AG04449 (cell line): ENCODE measurements at regions of chr5 and their contacts with region 1.

Region 1: DNA sequence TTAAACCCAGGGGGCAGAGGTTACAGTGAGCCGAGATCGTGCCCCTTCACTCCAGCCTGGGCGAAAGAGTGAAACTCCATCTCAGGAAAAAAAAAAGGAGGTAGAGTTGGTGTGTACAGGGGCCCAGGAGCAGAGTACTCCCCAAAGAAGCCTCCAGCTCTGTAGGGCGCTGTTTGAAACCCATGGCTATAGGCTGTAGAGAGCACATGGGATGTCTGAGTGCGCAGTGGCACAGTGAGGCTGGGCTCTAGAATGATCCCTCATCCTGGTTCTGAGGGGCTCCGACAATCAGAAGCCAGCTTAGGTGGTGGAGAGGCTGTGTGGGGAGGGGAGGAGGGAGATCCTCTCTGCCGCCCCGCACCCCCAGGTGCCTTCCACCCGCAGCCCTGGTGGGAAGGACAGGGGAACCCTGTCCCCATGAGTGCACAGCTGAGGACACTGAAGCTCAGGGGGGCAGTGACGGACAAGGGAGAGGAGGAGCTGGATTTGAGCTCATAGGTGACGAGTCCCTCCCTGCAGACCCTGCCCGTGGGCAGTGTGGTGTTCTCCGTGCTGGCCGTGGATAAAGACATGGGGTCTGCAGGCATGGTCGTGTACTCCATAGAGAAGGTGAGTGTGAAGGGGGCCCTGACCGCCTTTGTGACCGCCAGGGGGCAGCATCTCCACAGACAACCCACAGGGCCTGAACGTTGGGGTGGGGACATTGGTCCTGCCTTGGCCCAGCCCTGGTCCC is 24.6 kb downstream of the CDHR2 start:
- DNase-seq: no peak
- H3K4me3 ChIP-seq: no peak overlapping the region
- CTCF ChIP-seq: peak; percentile 88

Region 2: GRCh38 chr5:176415952-176416924 is 157.5 kb before region 1 on chr5 and contains the start of gene CLTB:
- CTCF ChIA-PET with region 1: interaction called, 66 read pairs
- POLR2A ChIA-PET with region 1: no interaction called
- DNase-seq: no peak
- H3K4me3 ChIP-seq: peak within 1 kb of the TSS; percentile 72
- CTCF ChIP-seq: peak; percentile 73

Region 3: GRCh38 chr5:176537608-176538504 is 35.9 kb before region 1 on chr5:
- CTCF ChIA-PET with region 1: interaction called, 12 read pairs
- POLR2A ChIA-PET with region 1: no interaction called
- DNase-seq: peak; percentile 97
- H3K4me3 ChIP-seq: peak overlapping the region; percentile 99
- CTCF ChIP-seq: no peak

Region 4: GRCh38 chr5:176559683-176560082 is 14.0 kb before region 1 on chr5:
- CTCF ChIA-PET with region 1: interaction called, 15 read pairs
- POLR2A ChIA-PET with region 1: no interaction called
- DNase-seq: no peak
- H3K4me3 ChIP-seq: no peak overlapping the region
- CTCF ChIP-seq: no peak

Region 5: DNA sequence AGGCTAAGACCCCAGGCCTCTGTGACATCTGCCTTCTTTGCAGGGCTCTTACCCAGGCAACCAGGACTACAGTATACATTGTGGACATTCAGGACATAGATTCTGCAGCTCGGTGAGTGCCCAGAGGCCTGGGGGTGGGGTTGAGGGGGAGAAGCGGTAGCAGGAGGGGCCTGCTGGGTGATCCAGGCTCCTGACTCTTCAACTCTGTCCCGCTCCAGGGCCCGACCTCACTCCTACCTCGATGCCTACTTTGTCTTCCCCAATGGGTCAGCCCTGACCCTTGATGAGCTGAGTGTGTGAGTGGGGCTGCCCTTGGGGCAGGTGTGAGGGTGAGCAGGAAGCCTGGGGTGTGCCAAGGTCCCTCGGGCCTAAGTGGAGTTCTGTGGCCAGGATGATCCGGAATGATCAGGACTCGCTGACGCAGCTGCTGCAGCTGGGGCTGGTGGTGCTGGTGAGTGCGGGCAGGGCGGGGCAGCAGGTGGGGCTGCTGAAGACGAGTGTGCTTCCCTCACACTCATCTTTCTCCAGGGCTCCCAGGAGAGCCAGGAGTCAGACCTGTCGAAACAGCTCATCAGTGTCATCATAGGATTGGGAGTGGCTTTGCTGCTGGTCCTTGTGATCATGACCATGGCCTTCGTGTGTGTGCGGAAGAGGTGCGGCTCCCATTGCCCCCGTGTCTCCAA is 16.4 kb after region 1 on chr5:
- CTCF ChIA-PET with region 1: interaction called, 44 read pairs
- POLR2A ChIA-PET with region 1: no interaction called
- DNase-seq: no peak
- H3K4me3 ChIP-seq: no peak overlapping the region
- CTCF ChIP-seq: no peak

Region 6: GRCh38 chr5:176620333-176620981 is 46.7 kb after region 1 on chr5:
- CTCF ChIA-PET with region 1: interaction called, 11 read pairs
- POLR2A ChIA-PET with region 1: no interaction called
- DNase-seq: no peak
- H3K4me3 ChIP-seq: peak overlapping the region; percentile 25; the same call in 1 of the 2 replicates
- CTCF ChIP-seq: no peak

Region 7: GRCh38 chr5:176647030-176647866 is 73.5 kb after region 1 on chr5 and contains the start of gene TSPAN17:
- CTCF ChIA-PET with region 1: interaction called, 24 read pairs
- POLR2A ChIA-PET with region 1: no interaction called
- DNase-seq: peak; percentile 84
- H3K4me3 ChIP-seq: peak within 1 kb of the TSS; percentile 81
- CTCF ChIP-seq: peak; percentile 46

Region 8: GRCh38 chr5:176693477-176693851 is 119.7 kb after region 1 on chr5:
- CTCF ChIA-PET with region 1: no interaction called
- POLR2A ChIA-PET with region 1: no interaction called
- DNase-seq: no peak
- H3K4me3 ChIP-seq: no peak overlapping the region
- CTCF ChIP-seq: no peak

Region 9: DNA sequence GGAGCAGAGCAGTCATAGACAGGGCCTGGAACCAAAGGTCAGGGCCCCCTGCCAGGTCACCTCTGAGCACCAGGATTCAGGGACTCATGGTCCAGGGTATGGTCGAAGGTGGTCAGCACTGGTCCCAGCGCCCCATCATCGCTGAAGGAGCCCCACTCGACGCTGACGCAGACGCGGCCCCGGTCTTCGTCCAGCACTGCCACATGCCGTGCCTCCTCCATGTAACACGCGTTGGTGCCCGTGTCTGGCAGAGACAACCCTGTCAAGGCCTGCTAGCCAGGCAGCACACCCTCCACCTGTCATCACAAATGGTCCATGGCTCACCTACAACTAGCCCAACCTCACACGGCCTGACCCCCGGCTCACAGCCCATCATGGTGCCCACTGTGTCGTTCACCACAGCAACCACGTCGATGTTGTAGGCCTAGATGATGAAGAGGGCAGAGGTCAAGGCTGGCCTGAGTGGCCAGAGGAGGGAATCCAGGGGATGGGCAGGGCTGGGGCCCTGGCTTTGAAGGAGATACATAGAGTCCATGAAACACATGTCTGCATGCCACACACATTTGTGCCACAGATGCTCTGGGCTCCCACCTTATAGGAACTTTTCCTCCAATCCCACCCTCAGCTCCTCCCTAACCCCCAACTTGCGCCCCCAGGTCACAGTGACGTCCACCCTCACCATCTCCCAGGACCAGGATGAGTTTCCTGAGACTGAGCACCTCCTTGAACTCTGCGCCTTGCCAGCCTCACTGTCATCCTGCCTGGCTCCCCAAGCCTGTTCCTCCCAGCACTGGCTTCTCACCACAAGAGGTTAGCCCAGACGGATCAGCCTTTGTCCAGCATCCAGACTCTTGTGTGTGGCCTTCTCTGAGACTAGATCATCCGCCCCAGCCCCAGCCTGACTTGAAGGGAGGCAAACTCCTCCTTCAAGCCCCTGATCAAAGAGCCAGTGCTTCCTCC is 315.9 kb after region 1 on chr5:
- CTCF ChIA-PET with region 1: no interaction called
- POLR2A ChIA-PET with region 1: no interaction called
- DNase-seq: no peak
- H3K4me3 ChIP-seq: no peak overlapping the region
- CTCF ChIP-seq: no peak

Region 10: GRCh38 chr5:177086924-177087706 is 513.4 kb after region 1 on chr5:
- CTCF ChIA-PET with region 1: no interaction called
- POLR2A ChIA-PET with region 1: no interaction called
- DNase-seq: no peak
- H3K4me3 ChIP-seq: peak overlapping the region; percentile 49
- CTCF ChIP-seq: peak; percentile 56

Region 11: DNA sequence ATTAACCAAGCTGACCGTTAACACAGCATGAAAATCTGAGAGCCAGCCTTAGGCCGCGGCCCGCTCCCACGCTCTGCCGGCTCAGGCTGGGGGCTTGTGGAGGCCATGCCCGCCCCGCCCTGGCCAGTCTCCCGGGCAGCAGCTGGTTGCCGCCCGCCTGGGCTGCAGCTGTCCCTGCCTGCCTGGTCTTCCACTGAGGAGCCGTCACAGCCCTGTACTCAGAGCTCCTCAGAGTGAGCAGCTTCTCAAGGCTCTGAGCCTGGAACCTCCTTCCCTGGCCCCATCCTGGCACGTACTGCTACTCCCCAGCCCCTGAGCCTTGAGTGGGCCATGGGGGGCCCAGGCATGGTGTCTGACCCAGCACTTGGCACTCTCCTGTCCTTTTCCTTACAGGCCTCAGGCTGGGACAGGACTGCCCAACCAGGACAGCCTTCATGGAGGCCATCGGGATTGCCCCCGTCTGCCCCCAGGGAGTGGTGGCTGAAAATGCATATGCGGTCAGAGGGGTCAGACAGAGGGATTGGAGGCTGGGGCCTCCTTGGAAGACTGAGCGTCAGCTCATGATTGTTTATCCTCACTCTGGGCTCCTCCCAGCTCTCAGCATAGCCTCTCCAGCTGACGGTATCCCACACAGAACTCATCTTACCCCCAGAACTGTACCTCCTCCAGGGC is 524.9 kb after region 1 on chr5:
- CTCF ChIA-PET with region 1: no interaction called
- POLR2A ChIA-PET with region 1: no interaction called
- DNase-seq: no peak
- H3K4me3 ChIP-seq: no peak overlapping the region
- CTCF ChIP-seq: no peak